ENCODE measurements at regions of chr1 and their contacts with region 1.

Region 1: GRCh38 chr1:176897350-176898236 is 266.9 kb downstream of the ASTN1 start:
- H3K4me3 ChIP-seq: no peak overlapping the region
- H3K27ac ChIP-seq: no peak overlapping the region
- H3K4me1 ChIP-seq: no peaks in the 10 kb centered on the region
- CTCF ChIP-seq: peak; percentile 82

Region 2: GRCh38 chr1:176384841-176385240 is 512.8 kb before region 1 on chr1:
- CTCF ChIA-PET with region 1: no interaction called
- POLR2A ChIA-PET with region 1: no interaction called
- H3K4me3 ChIP-seq: no peak overlapping the region
- H3K27ac ChIP-seq: no peak overlapping the region
- H3K4me1 ChIP-seq: no peaks in the 10 kb centered on the region
- CTCF ChIP-seq: no peak

Region 3: GRCh38 chr1:176541663-176542062 is 355.9 kb before region 1 on chr1:
- CTCF ChIA-PET with region 1: no interaction called
- POLR2A ChIA-PET with region 1: no interaction called
- H3K4me3 ChIP-seq: no peak overlapping the region
- H3K27ac ChIP-seq: no peak overlapping the region
- H3K4me1 ChIP-seq: no peaks in the 10 kb centered on the region
- CTCF ChIP-seq: no peak

Region 4: GRCh38 chr1:176949033-176949662 is 51.6 kb after region 1 on chr1:
- CTCF ChIA-PET with region 1: interaction called, 21 read pairs
- POLR2A ChIA-PET with region 1: no interaction called
- H3K4me3 ChIP-seq: no peak overlapping the region
- H3K27ac ChIP-seq: no peak overlapping the region
- H3K4me1 ChIP-seq: no peaks in the 10 kb centered on the region
- CTCF ChIP-seq: peak; percentile 52; the same call in 1 of the 2 replicates

Region 5: DNA sequence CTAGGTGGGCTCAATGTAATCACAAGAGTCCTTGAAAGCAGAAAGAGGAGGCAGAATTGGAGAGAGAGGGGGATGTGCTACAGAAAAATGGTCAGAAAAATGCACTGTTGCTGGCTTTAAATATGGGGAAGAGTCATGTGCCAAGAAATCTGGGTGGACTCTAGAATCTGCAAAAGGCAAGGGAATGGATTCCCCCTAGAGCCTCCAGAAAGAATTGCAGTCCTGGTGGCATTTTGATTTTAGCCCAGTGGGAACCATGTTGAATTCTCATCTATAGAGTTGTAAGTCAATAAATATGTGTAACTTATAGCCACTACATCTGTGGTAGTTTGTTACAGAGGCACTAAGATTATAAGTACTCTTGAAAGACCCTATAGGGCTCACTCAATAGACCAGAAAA is 56.6 kb after region 1 on chr1:
- CTCF ChIA-PET with region 1: interaction called, 21 read pairs
- POLR2A ChIA-PET with region 1: no interaction called
- H3K4me3 ChIP-seq: no peak overlapping the region
- H3K27ac ChIP-seq: no peak overlapping the region
- H3K4me1 ChIP-seq: no peaks in the 10 kb centered on the region
- CTCF ChIP-seq: no peak

Region 6: GRCh38 chr1:176996456-176997090 is 99.0 kb after region 1 on chr1:
- CTCF ChIA-PET with region 1: no interaction called
- POLR2A ChIA-PET with region 1: no interaction called
- H3K4me3 ChIP-seq: no peak overlapping the region
- H3K27ac ChIP-seq: no peak overlapping the region
- H3K4me1 ChIP-seq: no peaks in the 10 kb centered on the region
- CTCF ChIP-seq: no peak

Region 7: DNA sequence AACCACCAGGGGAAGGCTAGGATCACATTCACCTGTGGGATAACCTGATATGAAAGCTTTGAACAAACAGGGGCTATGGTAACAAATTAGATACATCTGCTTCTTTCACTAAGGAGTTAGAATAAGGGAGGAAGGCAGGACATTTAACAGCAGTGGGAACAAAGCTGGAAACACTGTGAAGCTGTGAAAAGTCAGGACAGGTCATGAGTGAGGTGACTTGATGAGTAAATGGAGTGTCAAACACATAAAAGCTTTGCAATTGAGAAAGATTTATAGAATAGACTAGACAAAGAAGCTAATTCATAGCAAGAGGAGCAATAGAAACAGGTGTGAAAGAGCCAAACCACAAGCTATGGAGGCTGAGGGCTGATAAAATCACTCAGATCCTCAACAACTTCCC is 156.9 kb after region 1 on chr1:
- CTCF ChIA-PET with region 1: no interaction called
- POLR2A ChIA-PET with region 1: no interaction called
- H3K4me3 ChIP-seq: no peak overlapping the region
- H3K27ac ChIP-seq: no peak overlapping the region
- H3K4me1 ChIP-seq: no peaks in the 10 kb centered on the region
- CTCF ChIP-seq: no peak

Region 8: DNA sequence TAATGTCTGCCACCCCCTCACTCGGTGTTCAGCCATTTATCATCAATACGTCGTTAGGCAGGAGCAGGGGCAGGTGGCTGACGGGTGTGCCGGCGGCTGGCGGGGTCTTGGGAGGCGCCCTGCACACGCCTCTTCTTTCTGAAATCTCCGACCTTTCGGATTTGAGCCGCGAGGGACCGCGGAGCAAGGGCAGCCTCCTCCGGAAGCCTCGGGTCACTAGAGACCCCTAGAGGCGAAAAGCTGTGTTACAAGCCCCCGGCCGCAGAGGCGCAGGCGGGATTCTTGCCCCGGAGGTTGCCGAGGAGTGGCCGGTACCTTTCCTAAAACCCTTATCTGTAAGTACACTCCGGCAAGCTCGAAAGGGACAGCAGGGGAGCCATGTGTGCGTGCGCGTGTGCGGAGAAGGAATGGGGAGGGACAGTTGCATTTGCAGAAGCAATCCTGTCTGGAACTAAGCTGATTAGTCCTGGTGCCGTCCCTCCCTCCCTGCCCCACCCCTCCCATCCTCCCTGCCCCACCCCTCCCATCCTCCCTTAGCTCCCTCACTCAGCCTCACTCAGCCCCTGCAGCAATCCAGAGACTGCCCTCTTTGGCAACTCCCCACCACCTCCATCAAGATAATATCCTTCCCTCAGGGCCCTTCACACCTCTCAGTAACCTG is 284.2 kb after region 1 on chr1:
- CTCF ChIA-PET with region 1: interaction called, 31 read pairs
- POLR2A ChIA-PET with region 1: interaction called, 4 read pairs
- H3K4me3 ChIP-seq: peak overlapping the region; percentile 35
- H3K27ac ChIP-seq: peak overlapping the region; percentile 39; the same call in 1 of the 2 replicates
- H3K4me1 ChIP-seq: peaks cover 3% of the 10 kb centered on the region; the same call in 1 of the 2 replicates
- CTCF ChIP-seq: peak; percentile 93

Region 9: GRCh38 chr1:177256153-177257075 is 358.8 kb after region 1 on chr1:
- CTCF ChIA-PET with region 1: interaction called, 28 read pairs
- POLR2A ChIA-PET with region 1: no interaction called
- H3K4me3 ChIP-seq: no peak overlapping the region
- H3K27ac ChIP-seq: peak overlapping the region; percentile 85
- H3K4me1 ChIP-seq: peaks cover 19% of the 10 kb centered on the region
- CTCF ChIP-seq: peak; percentile 78

Region 10: DNA sequence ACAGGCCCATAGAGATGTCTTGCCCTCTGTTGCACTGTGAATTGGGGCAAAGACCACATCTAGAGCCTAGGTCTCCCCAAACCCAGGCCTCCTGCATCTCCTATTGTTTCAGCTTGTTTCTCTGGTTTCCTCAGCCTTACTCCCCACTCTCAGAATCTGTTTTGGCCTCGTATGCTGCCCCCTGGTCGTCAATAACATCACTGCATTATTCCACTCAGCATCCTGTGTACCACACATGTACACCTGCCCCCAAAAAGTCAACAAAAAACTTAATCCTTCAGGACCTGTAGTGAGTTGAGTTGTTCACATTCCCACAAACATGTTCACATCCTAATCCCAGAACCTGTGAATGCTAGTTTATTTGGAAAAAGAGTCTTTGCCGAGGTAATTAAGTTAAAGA is 458.0 kb after region 1 on chr1:
- CTCF ChIA-PET with region 1: interaction called, 31 read pairs
- POLR2A ChIA-PET with region 1: no interaction called
- H3K4me3 ChIP-seq: no peak overlapping the region
- H3K27ac ChIP-seq: no peak overlapping the region
- H3K4me1 ChIP-seq: no peaks in the 10 kb centered on the region
- CTCF ChIP-seq: peak; percentile 75

Region 11: GRCh38 chr1:177948336-177948972 is 1050.9 kb after region 1 on chr1:
- CTCF ChIA-PET with region 1: interaction called, 42 read pairs
- POLR2A ChIA-PET with region 1: no interaction called
- H3K4me3 ChIP-seq: no peak overlapping the region
- H3K27ac ChIP-seq: no peak overlapping the region
- H3K4me1 ChIP-seq: no peaks in the 10 kb centered on the region
- CTCF ChIP-seq: peak; percentile 66

Measured in HEK293 (cell line).